Common myeloid progenitor, CD34-positive (primary cell): ENCODE measurements at regions of chr20 and their contacts with region 1.

Region 1: DNA sequence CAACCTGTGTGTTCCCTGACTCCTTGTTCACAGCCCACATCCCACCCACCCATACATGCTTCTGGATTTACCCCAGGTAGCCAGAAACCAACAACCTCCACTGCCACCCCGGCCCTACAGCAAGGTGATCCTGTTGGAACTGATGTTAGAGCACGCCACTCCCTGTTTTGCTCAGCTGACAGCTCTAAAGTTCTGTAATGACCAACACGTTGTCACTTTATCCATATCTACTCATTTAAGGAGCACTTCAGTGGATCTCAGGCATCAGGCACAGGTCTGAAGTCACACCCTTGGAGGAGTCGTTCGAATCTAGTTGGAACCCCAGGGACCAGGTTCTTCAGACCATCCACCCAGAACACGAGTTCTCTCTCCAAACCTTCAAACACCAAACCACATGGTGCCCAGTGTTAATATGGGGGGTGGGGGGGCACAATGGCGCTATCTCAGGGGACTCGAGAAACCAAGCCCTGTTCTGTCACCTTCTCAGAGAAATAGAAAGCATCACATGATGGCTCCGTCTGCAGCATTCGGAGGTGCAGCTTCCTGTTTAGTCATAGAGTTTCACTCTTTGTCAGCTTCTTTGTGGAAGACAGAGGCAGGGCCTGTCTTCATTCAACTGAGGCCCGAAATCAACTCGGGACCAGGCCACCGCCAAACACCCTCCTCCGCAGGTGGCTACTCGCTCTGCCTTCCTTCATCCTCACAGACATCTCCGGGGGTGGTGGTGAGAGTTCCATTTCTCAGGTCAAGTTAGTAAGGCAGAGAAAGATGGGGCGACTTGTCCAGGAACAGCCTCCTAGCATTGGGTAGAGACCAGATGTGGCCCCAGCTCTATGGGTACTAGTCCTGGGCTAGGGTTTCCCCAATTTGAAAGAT is 142.2 kb downstream of the NFATC2 start:
- DNase-seq: peak; percentile 50 to 84 (median 75)
- H3K4me3 ChIP-seq: no peak overlapping the region
- H3K27ac ChIP-seq: no peak overlapping the region
- H3K4me1 ChIP-seq: peaks cover 7 to 40% (median 31%) of the 10 kb centered on the region in 4 experiments
- H3K27me3 ChIP-seq: no peaks in the 10 kb centered on the region

Region 2: DNA sequence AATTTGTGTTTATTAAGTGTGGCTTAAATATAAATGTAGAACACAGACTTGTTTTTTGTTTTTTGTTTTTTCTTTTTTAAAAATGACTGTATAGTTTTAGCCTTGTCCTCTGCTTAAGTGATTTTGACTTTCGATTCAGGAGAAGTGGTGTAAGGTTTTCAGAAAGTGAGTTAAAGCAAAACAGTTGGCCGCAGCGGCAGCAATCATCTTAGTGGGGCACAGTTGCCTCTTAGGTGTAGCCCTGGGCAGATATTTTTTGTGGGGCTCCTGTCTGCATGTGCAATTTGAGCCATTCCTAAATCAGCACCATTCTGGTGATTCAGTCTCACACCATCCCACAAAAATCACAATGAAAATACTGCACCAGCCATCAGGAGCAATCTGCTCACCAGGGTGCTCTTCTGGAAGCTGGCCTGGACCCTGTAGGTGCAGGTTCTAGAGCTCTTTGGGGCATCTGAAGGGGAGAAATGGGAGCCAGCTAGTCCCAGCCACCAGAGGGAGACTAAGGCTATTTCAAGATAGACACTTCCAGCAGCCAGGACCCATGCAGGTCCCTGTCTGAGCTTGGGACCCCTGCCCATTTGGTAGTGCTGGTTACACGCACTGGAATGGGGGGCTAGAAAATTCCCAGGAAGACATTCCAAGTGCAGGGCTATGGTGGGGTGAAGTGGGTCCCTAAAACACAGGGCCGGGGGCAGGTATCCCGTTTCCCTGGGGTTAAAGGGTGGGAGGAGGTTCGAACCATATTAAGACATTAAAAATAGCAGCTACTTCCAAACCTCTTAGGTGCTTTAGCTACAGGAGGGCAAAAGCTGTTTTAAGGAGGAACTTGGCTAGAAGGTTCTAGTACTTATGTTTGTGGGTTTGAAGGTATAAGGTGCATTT is 14.4 kb before region 1 on chr20:
- CTCF ChIA-PET with region 1: interaction called, 22 read pairs
- POLR2A ChIA-PET with region 1: no interaction called
- DNase-seq: peak; percentile 31 to 57 (median 49)
- H3K4me3 ChIP-seq: no peak overlapping the region
- H3K27ac ChIP-seq: no peak overlapping the region
- H3K4me1 ChIP-seq: no peaks in the 10 kb centered on the region
- H3K27me3 ChIP-seq: no peaks in the 10 kb centered on the region